Activated B cell treated with CpG ODN at 0.5 μM for 24 hours (primary cell): ENCODE measurements at regions of chr11 and their contacts with region 1.

Region 1: GRCh38 chr11:59171508-59172322 is at the start of gene DTX4:
- DNase-seq: peak; percentile 82
- ATAC-seq: peak; percentile 78
- H3K4me3 Mint-ChIP-seq: peak within 1 kb of the TSS; percentile 96
- H3K27ac Mint-ChIP-seq: peak within 1 kb of the TSS; percentile 90
- H3K4me1 Mint-ChIP-seq: peaks cover 34% of the 10 kb centered on the region
- H3K27me3 Mint-ChIP-seq: no peaks in the 10 kb centered on the region
- CTCF ChIP-seq: no peak
- total RNA-seq, gene DTX4: 24.2 TPM in 2 replicates

Region 2: DNA sequence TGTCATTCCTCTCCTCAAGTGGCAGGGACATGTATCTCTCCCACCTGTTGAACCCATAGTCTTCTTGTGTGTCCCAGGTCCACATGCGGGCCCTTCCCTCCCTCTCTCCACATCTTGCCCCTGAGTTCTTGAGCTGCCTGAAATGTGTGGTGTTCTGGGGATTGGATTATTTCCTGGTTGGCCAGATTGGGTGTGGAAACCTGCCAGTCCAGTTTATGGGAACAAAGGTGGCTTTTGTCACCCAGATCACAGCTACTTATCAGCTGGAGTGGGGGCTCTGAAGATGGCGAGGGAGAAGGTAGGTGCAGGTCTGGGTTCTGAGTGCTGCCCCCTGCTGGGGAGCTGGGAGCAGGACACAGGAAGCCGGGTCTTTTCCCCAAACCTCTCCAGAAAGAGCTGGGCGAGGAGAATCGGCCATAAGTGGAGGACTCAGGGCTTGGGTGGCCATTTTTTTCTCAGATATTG is 14.4 kb after region 1 on chr11:
- CTCF ChIA-PET with region 1: interaction called, 102 read pairs
- POLR2A ChIA-PET with region 1: interaction called, 10 read pairs
- intact Hi-C with region 1: loop called (anchors 1 kb)
- DNase-seq: peak; percentile 44
- ATAC-seq: peak; percentile 69
- H3K4me3 Mint-ChIP-seq: no peak overlapping the region
- H3K27ac Mint-ChIP-seq: peak overlapping the region; percentile 24
- H3K4me1 Mint-ChIP-seq: peaks cover 20% of the 10 kb centered on the region
- H3K27me3 Mint-ChIP-seq: no peaks in the 10 kb centered on the region
- CTCF ChIP-seq: peak; percentile 22

Region 3: GRCh38 chr11:59207988-59208451 is 36.3 kb after region 1 on chr11:
- CTCF ChIA-PET with region 1: interaction called, 94 read pairs
- POLR2A ChIA-PET with region 1: interaction called, 70 read pairs
- intact Hi-C with region 1: loop called (anchors 1 kb)
- DNase-seq: no peak
- ATAC-seq: peak; percentile 45
- H3K4me3 Mint-ChIP-seq: peak overlapping the region; percentile 98
- H3K27ac Mint-ChIP-seq: peak overlapping the region; percentile 93
- H3K4me1 Mint-ChIP-seq: peaks cover 93% of the 10 kb centered on the region
- H3K27me3 Mint-ChIP-seq: no peaks in the 10 kb centered on the region
- CTCF ChIP-seq: no peak

Region 4: DNA sequence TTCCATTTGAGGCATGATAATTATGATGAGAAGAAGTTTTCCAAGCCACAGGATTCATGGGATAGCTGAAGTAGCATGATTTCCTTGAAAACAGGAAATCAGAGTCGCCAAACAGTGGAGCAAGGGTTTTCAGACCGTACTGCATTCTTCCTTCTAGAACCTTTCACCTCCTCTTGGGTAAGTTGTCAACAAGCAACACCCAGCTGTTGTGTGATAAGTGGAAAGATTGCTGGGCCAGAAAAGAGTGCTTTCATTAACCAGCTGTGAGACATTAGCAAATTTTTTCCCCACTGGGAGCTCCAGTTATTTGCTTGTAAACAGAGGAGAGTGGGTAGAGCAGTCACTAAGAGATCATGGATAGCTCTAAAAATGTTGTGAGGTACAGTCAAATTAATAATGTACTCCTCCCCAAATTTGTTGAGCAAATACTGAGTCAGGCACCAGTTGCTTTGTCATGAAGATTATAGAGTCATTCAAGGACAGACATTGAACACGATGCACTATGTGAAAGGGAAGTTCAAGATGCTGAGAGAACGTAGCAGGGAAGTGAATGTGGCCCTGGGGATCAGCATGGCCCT is 52.7 kb after region 1 on chr11:
- CTCF ChIA-PET with region 1: interaction called, 22 read pairs
- POLR2A ChIA-PET with region 1: interaction called, 10 read pairs
- intact Hi-C with region 1: loop called (anchors 1 kb)
- DNase-seq: no peak
- ATAC-seq: peak; percentile 65
- H3K4me3 Mint-ChIP-seq: peak overlapping the region; percentile 16
- H3K27ac Mint-ChIP-seq: peak overlapping the region; percentile 81
- H3K4me1 Mint-ChIP-seq: peaks cover 59% of the 10 kb centered on the region
- H3K27me3 Mint-ChIP-seq: no peaks in the 10 kb centered on the region
- CTCF ChIP-seq: no peak

Region 5: GRCh38 chr11:59247531-59248227 is 76.0 kb after region 1 on chr11:
- CTCF ChIA-PET with region 1: no interaction called
- POLR2A ChIA-PET with region 1: no interaction called
- intact Hi-C with region 1: no loop called
- DNase-seq: no peak
- ATAC-seq: no peak
- H3K4me3 Mint-ChIP-seq: no peak overlapping the region
- H3K27ac Mint-ChIP-seq: no peak overlapping the region
- H3K4me1 Mint-ChIP-seq: peaks cover 7% of the 10 kb centered on the region
- H3K27me3 Mint-ChIP-seq: no peaks in the 10 kb centered on the region
- CTCF ChIP-seq: no peak

Region 6: GRCh38 chr11:59273373-59273841 is 101.7 kb after region 1 on chr11:
- CTCF ChIA-PET with region 1: interaction called, 15 read pairs
- POLR2A ChIA-PET with region 1: interaction called, 11 read pairs
- intact Hi-C with region 1: no loop called
- DNase-seq: no peak
- ATAC-seq: peak; percentile 83
- H3K4me3 Mint-ChIP-seq: peak overlapping the region; percentile 70
- H3K27ac Mint-ChIP-seq: peak overlapping the region; percentile 92
- H3K4me1 Mint-ChIP-seq: peaks cover 91% of the 10 kb centered on the region
- H3K27me3 Mint-ChIP-seq: no peaks in the 10 kb centered on the region
- CTCF ChIP-seq: no peak

Region 7: DNA sequence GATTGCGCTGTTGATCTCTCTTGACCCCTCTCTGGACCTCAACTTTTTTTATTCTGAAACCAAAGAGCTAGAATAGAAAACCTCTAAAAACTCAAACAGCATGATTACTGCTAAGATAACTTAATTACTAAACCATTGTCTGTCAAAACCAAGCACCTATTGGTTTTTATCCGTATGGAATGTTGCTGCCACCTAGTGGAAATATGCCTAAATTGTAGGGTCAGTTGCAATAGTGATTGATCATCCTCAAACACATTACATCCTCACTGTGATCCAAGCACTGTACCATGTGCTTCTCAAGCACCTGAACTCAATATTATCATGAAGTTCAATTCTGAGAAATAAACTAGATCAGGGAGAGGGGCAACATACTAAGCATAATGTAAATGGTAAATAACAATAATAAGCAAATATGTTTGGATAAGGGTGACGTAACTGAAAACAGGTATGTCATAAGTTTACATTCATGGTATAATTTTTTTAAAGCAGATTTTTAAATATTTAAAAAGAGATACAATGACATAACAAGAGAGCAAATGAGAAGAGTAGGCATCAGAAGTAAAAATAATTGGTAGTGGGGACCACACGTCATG is 258.3 kb after region 1 on chr11:
- CTCF ChIA-PET with region 1: interaction called, 91 read pairs
- POLR2A ChIA-PET with region 1: interaction called, 10 read pairs
- intact Hi-C with region 1: loop called (anchors 1 kb)
- DNase-seq: no peak
- ATAC-seq: peak; percentile 87
- H3K4me3 Mint-ChIP-seq: no peak overlapping the region
- H3K27ac Mint-ChIP-seq: no peak overlapping the region
- H3K4me1 Mint-ChIP-seq: no peaks in the 10 kb centered on the region
- H3K27me3 Mint-ChIP-seq: peaks cover 9% of the 10 kb centered on the region
- CTCF ChIP-seq: peak; percentile 50

Region 8: GRCh38 chr11:59680287-59681154 is 508.8 kb after region 1 on chr11:
- CTCF ChIA-PET with region 1: no interaction called
- POLR2A ChIA-PET with region 1: no interaction called
- intact Hi-C with region 1: loop called (anchors 1 kb)
- DNase-seq: peak; percentile 32
- ATAC-seq: peak; percentile 88
- H3K4me3 Mint-ChIP-seq: no peak overlapping the region
- H3K27ac Mint-ChIP-seq: no peak overlapping the region
- H3K4me1 Mint-ChIP-seq: no peaks in the 10 kb centered on the region
- H3K27me3 Mint-ChIP-seq: peaks cover 9% of the 10 kb centered on the region
- CTCF ChIP-seq: no peak